ENCODE measurements at regions of chr19 and their contacts with region 1.

Region 1: DNA sequence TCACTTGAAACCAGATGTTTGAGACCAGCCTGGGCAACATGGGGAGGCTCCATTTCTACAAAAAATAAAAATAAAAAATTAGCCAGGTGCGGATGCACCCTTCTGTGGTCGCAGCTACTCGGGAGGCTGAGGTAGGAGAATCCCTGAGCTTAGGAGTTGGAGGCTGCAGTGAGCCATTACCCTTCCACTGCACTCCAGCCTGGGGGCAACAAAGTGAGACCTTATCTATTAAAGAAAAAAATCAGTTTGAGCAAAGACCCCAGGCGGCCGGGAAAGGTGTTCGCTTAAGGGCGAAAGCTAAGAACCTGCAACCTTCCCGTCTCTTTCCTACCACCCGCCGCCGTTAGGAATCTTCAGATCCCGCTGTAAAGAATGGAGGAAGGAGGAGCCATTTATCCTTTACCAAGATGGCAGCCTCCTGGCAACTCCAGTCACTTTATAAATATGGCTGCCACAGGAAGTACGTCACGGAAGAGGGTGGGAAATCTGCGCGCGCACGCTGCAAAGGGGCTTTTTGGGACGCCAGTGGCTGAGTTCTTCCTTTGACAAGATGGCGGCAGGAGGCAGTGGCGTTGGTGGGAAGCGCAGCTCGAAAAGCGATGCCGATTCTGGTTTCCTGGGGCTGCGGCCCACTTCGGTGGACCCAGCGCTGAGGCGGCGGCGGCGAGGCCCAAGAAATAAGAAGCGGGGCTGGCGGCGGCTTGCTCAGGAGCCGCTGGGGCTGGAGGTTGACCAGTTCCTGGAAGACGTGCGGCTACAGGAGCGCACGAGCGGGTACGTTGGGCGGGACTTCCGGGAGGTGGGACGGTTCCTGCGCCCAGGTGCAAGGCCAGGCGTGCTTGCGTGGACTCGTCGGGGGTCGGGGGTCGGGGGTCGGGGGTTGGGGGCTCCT is at the start of gene NOP53:
- DNase-seq: peak; percentile 81 to 97 (median 89)
- ATAC-seq: peak; percentile 84
- H3K4me3 ChIP-seq: peak within 1 kb of the TSS; percentile 85
- H3K27ac ChIP-seq: peak within 1 kb of the TSS; percentile 94
- H3K4me1 ChIP-seq: peaks cover 29 to 38% of the 10 kb centered on the region in 2 experiments
- H3K27me3 ChIP-seq: no peaks in the 10 kb centered on the region
- CTCF ChIP-seq: no peak
- EP300 ChIP-seq: no peak; the same call in 1 of the 2 replicates
- POLR2A ChIP-seq: peak; percentile 99
- RAD21 ChIP-seq: no peak
- polyA plus RNA-seq, gene NOP53: 6.5 to 7.0 TPM

Region 2: DNA sequence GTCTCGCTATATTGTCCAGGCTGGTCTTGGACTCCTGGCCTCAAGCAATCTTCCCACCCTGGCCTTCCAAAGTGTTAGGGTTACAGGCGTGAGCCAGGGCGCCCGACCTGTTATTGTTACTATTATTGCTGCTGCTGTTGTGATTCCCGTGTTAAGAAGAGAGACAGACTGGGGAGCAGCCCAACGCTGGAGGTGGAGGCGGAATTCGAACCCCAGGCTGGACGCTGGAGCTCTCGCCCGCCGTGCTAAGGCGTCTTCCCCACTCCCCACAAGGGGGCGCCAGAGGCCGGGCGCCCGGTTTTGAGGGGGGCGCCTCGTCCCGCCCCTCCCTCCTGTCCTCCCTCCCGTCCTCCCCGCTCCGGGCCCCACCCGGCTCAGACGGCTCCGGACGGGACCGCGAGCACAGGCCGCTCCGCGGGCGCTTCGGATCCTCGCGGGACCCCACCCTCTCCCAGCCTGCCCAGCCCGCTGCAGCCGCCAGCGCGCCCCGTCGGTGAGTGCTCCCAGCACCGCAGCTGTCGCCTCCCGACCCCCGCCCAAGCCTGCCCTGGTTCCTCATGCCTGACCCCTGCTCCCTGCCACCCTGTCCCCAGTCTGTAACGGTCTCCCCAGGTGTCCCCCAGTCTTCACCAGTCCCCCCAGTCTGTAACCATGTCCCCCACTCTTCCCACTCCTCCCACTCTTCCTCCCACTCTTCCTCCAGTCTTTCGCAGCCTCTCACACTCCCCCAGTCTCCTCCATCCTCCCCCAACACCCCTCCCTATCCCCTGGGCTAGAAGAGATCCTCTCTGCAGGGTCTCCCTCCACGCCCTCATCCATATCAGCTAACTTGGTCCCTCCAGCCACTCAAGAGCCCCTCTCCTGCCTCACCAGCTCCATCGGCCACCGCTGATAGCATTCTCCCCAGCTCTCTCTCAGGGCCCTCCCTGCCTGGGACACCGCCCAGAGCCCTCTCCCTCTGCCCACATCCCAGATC is 31.9 kb before region 1 on chr19 and contains the start of gene EHD2:
- CTCF ChIA-PET with region 1: interaction called, 37 read pairs
- POLR2A ChIA-PET with region 1: interaction called, 5 read pairs
- in situ Hi-C with region 1: no loop called
- intact Hi-C with region 1: loop called (anchors 1 kb)
- DNase-seq: peak; percentile 89 to 97 (median 94)
- ATAC-seq: peak; percentile 92
- H3K4me3 ChIP-seq: peak within 1 kb of the TSS; percentile 83
- H3K27ac ChIP-seq: peak within 1 kb of the TSS; percentile 63
- H3K4me1 ChIP-seq: peaks cover 13 to 22% of the 10 kb centered on the region in 2 experiments
- H3K27me3 ChIP-seq: no peaks in the 10 kb centered on the region
- CTCF ChIP-seq: peak; percentile 90 to 93 (median 93)
- EP300 ChIP-seq: no peak
- POLR2A ChIP-seq: peak; percentile 63; the same call in 1 of the 2 replicates
- RAD21 ChIP-seq: peak; percentile 96 to 98
- polyA plus RNA-seq, gene EHD2: 1.7 to 2.1 TPM

Region 3: DNA sequence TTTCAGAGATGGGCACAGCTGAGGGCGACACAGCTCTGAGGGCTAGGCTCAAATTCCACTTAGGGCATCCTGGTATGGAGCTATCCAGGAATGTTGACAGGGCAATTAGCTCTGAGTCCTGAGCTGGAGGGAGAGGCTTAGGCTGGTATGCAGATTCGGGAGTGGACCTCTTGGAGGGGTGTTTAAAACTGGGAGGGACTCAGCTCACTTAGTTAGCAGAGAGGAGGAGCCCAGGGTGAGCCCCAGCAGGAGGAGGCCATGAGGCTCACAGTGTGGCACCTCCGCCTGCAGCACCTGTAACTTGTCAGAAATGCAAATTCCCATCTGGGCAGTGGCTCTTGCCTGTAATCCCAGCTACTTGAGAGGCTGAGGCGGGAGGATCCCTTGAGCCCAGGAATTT is 10.1 kb before region 1 on chr19:
- CTCF ChIA-PET with region 1: no interaction called
- POLR2A ChIA-PET with region 1: interaction called, 14 read pairs
- in situ Hi-C with region 1: no loop called
- intact Hi-C with region 1: no loop called
- DNase-seq: no peak
- ATAC-seq: no peak
- H3K4me3 ChIP-seq: no peak overlapping the region
- H3K27ac ChIP-seq: no peak overlapping the region
- H3K4me1 ChIP-seq: peaks cover 6 to 8% of the 10 kb centered on the region in 2 experiments; a peak in 4 of 5 replicates
- H3K27me3 ChIP-seq: no peaks in the 10 kb centered on the region; a peak in 1 of 5 replicates
- CTCF ChIP-seq: no peak
- EP300 ChIP-seq: no peak
- POLR2A ChIP-seq: no peak
- RAD21 ChIP-seq: no peak

Region 4: DNA sequence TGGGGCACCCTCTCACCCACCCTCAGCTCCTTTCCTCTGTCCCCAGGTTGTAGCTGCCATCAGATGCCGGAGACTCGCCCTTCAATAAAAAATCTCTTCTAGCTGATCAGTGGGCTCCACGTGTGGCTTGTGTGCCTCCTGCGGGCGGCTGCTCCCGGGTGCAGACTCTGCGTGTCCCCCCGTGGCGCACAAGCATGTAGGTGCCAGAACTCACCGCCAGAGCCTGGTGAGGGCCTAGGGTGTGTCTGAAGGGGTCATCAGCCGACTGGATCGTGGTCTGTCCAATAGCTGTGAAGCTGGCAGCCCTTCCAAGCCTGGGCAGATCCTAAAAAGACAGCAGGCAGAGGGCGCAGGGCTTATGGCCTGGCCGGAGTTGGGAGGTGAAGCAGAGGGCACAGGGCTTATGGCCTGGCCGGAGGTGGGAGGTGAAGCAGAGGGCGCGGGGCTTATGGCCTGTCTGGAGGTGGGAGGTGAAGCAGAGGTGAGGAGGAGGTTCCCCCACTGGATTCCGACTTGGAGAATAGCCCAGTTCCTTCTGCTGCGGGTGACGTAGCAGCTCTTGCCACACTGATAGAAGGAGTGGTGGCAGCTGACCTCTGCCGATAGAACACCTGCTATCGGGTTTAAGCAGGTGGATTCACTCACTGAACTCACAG is 11.8 kb after region 1 on chr19:
- CTCF ChIA-PET with region 1: no interaction called
- POLR2A ChIA-PET with region 1: interaction called, 17 read pairs
- in situ Hi-C with region 1: no loop called
- intact Hi-C with region 1: no loop called
- DNase-seq: no peak
- ATAC-seq: no peak
- H3K4me3 ChIP-seq: no peak overlapping the region
- H3K27ac ChIP-seq: no peak overlapping the region
- H3K4me1 ChIP-seq: peaks cover 0 to 21% of the 10 kb centered on the region in 2 experiments; a peak in 2 of 5 replicates
- H3K27me3 ChIP-seq: no peaks in the 10 kb centered on the region
- CTCF ChIP-seq: no peak
- EP300 ChIP-seq: no peak
- POLR2A ChIP-seq: no peak
- RAD21 ChIP-seq: no peak

Region 5: GRCh38 chr19:47779524-47780214 is 34.4 kb after region 1 on chr19:
- CTCF ChIA-PET with region 1: no interaction called
- POLR2A ChIA-PET with region 1: no interaction called
- in situ Hi-C with region 1: no loop called
- intact Hi-C with region 1: no loop called
- DNase-seq: peak in 2 of 4 experiments; percentile 17 to 32
- ATAC-seq: no peak
- H3K4me3 ChIP-seq: peak overlapping the region; percentile 95
- H3K27ac ChIP-seq: no peak overlapping the region; the same call in 1 of the 3 replicates
- H3K4me1 ChIP-seq: peaks cover 11 to 29% of the 10 kb centered on the region in 2 experiments; a peak in 3 of 5 replicates
- H3K27me3 ChIP-seq: no peaks in the 10 kb centered on the region
- CTCF ChIP-seq: no peak
- EP300 ChIP-seq: no peak
- POLR2A ChIP-seq: no peak
- RAD21 ChIP-seq: no peak

Region 6: GRCh38 chr19:47805313-47805712 is 60.1 kb after region 1 on chr19:
- CTCF ChIA-PET with region 1: no interaction called
- POLR2A ChIA-PET with region 1: no interaction called
- in situ Hi-C with region 1: no loop called
- intact Hi-C with region 1: no loop called
- DNase-seq: no peak
- ATAC-seq: no peak
- H3K4me3 ChIP-seq: no peak overlapping the region
- H3K27ac ChIP-seq: no peak overlapping the region
- H3K4me1 ChIP-seq: no peaks in the 10 kb centered on the region
- H3K27me3 ChIP-seq: peaks cover 12 to 23% of the 10 kb centered on the region in 2 experiments; a peak in 4 of 5 replicates
- CTCF ChIP-seq: no peak
- EP300 ChIP-seq: no peak
- POLR2A ChIP-seq: no peak
- RAD21 ChIP-seq: no peak

Region 7: GRCh38 chr19:47824396-47824795 is 79.1 kb after region 1 on chr19:
- CTCF ChIA-PET with region 1: no interaction called
- POLR2A ChIA-PET with region 1: no interaction called
- in situ Hi-C with region 1: no loop called
- intact Hi-C with region 1: no loop called
- DNase-seq: no peak
- ATAC-seq: no peak; the same call in 2 of the 3 replicates
- H3K4me3 ChIP-seq: no peak overlapping the region
- H3K27ac ChIP-seq: no peak overlapping the region
- H3K4me1 ChIP-seq: peaks cover 0 to 3% of the 10 kb centered on the region in 2 experiments; a peak in 1 of 5 replicates
- H3K27me3 ChIP-seq: peaks cover 13 to 63% of the 10 kb centered on the region in 2 experiments; a peak in 4 of 5 replicates
- CTCF ChIP-seq: peak in 2 of 3 experiments; percentile 16 to 25; a peak in 2 of 6 replicates
- EP300 ChIP-seq: no peak
- POLR2A ChIP-seq: no peak
- RAD21 ChIP-seq: no peak